ENCODE measurements at regions of chr1 and their contacts with region 1.

Region 1: GRCh38 chr1:161738627-161739287 is 10.8 kb upstream of the DUSP12 start:
- DNase-seq: peak; percentile 89
- H3K4me3 ChIP-seq: no peak overlapping the region
- H3K27ac ChIP-seq: peak overlapping the region; percentile 50
- H3K4me1 ChIP-seq: peaks cover 48% of the 10 kb centered on the region
- CTCF ChIP-seq: peak; percentile 85

Region 2: DNA sequence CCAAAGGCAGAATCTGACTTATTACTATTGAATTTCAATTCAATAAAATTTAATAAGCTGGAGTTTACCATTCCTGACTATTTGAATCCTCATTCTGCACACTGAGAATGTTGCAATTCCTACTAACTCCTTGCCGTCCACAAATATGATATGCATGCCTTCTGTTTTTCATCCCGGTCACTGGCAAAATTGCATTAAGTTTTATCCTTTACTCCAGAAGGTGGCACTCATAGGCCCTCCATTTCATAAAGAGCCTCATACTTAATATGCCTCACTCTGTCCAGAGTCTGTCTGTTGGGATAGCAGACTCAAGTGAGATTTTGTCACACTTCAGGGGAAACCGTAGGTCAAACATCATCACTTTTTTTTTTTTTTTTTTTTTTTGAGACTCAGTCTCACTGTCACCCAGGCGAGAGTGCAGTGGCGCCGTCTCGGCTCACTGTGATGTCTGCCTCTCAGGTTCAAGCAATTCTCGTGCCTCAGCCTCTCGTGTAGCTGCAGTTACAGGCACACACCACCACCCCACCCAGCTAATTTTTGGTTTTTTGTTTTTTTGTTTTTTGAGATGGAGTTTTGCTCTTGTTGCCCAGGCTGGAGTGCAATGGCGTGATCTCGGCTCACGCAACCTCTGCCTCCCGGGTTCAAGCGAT is 745.1 kb before region 1 on chr1:
- CTCF ChIA-PET with region 1: no interaction called
- POLR2A ChIA-PET with region 1: no interaction called
- intact Hi-C with region 1: no loop called
- DNase-seq: peak; percentile 50
- H3K4me3 ChIP-seq: no peak overlapping the region
- H3K27ac ChIP-seq: no peak overlapping the region
- H3K4me1 ChIP-seq: peaks cover 5% of the 10 kb centered on the region
- CTCF ChIP-seq: peak; percentile 75

Region 3: DNA sequence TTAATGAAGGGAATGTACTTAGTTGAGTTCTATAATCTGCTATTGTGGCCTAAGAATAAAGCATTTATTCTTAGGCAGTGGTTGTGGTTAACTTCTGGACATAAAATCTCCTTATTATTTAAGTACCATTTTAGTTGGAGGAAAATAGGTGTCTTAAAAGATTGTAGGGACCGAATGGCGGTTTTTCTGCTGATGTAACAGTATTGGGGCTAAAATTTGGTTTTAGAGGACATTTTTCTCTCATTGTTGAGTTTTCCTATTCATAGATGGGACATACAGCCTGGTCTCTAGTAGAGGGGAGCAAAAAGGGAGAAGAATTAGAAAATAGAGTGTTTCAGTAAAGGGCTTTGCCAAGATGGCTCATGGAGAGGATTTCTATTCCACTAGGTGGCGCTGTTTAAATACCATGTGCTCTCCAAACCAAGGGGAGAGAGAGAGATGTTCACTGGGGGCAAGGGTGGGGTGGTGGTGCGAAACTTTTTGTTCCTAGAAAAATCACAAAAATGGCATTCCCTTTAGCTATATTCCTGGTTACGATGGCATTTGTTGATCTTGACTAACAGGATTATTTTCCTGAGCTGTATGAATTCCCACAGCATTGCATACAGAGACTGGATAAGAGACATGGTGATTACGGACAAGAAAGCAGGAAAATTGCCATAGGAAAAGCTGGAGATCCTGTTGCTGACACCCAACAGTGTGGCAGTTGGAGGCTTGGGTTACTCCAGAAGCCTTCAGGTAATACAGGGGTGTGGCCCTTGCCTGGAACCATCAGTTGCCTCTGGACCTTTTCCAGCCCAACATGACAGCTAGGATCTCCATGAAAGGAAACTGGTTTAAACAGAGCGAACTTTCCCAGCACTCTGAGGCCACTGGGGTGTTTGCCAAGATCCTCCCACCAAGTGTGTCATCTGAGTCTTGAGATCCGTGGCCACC is 251.7 kb before region 1 on chr1:
- CTCF ChIA-PET with region 1: interaction called, 4 read pairs
- POLR2A ChIA-PET with region 1: no interaction called
- intact Hi-C with region 1: loop called (anchors 1 kb)
- DNase-seq: peak; percentile 81
- H3K4me3 ChIP-seq: no peak overlapping the region
- H3K27ac ChIP-seq: no peak overlapping the region
- H3K4me1 ChIP-seq: no peaks in the 10 kb centered on the region
- CTCF ChIP-seq: peak; percentile 95

Region 4: DNA sequence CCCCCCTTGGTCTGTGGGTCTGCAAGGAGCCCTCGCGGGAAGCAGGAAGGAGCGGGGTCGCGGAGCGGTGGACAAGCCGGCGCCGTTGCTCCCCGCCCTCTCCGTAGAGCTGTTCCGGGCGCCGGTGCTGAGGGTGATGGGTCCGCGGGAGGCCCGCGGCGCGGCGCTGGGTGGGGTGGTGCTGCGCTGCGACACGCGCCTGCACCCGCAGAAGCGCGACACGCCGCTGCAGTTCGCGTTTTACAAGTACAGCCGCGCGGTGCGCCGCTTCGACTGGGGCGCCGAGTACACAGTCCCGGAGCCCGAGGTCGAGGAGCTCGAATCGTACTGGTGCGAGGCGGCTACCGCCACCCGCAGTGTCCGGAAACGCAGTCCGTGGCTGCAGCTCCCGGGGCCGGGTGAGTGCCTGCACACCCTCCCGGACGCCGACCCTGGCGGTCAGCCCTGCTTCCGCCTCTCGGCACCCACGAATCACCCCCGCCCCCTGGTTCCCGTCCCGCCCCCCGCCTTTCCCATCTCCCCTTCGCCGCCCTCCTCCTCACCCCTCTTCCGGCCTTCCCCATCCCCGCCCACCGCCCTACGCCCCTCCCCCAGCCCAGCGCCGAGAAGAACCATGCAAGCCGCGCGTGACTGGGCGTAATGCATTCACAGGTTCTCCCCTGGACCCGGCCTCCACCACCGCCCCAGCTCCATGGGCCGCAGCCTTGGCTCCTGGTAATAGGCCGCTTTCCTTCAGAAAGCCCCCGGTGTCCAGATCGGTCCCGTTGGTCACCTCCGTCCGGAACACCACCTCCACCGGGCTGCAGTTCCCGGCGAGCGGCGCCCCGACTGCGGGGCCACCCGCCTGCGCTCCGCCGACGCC is 11.9 kb before region 1 on chr1:
- CTCF ChIA-PET with region 1: interaction called, 3 read pairs
- POLR2A ChIA-PET with region 1: interaction called, 33 read pairs
- intact Hi-C with region 1: no loop called
- DNase-seq: peak; percentile 89
- H3K4me3 ChIP-seq: peak overlapping the region; percentile 77
- H3K27ac ChIP-seq: peak overlapping the region; percentile 61
- H3K4me1 ChIP-seq: peaks cover 36% of the 10 kb centered on the region
- CTCF ChIP-seq: no peak

Region 5: GRCh38 chr1:161749509-161750407 is 11.0 kb after region 1 on chr1 and contains the start of gene DUSP12:
- CTCF ChIA-PET with region 1: interaction called, 7 read pairs
- POLR2A ChIA-PET with region 1: interaction called, 16 read pairs
- intact Hi-C with region 1: no loop called
- DNase-seq: peak; percentile 98
- H3K4me3 ChIP-seq: peak within 1 kb of the TSS; percentile 92
- H3K27ac ChIP-seq: peak within 1 kb of the TSS; percentile 75
- H3K4me1 ChIP-seq: peaks cover 28% of the 10 kb centered on the region
- CTCF ChIP-seq: peak; percentile 74
- total RNA-seq, gene DUSP12: 43.9 and 71.5 TPM in 2 replicates

Region 6: GRCh38 chr1:161766102-161766981 is 27.6 kb after region 1 on chr1 and contains the start of gene ATF6:
- CTCF ChIA-PET with region 1: no interaction called
- POLR2A ChIA-PET with region 1: no interaction called
- intact Hi-C with region 1: loop called (anchors 2 kb)
- DNase-seq: peak; percentile 85
- H3K4me3 ChIP-seq: peak within 1 kb of the TSS; percentile 92
- H3K27ac ChIP-seq: peak within 1 kb of the TSS; percentile 39
- H3K4me1 ChIP-seq: peaks cover 19% of the 10 kb centered on the region
- CTCF ChIP-seq: 0 out of 2 replicates have a peak, but pooled peaks have one; percentile 4
- total RNA-seq, gene ATF6: 8.5 and 10.2 TPM in 2 replicates

Region 7: GRCh38 chr1:161994175-161994668 is 255.5 kb after region 1 on chr1:
- CTCF ChIA-PET with region 1: no interaction called
- POLR2A ChIA-PET with region 1: no interaction called
- intact Hi-C with region 1: no loop called
- DNase-seq: no peak
- H3K4me3 ChIP-seq: no peak overlapping the region
- H3K27ac ChIP-seq: no peak overlapping the region
- H3K4me1 ChIP-seq: no peaks in the 10 kb centered on the region
- CTCF ChIP-seq: no peak

Region 8: DNA sequence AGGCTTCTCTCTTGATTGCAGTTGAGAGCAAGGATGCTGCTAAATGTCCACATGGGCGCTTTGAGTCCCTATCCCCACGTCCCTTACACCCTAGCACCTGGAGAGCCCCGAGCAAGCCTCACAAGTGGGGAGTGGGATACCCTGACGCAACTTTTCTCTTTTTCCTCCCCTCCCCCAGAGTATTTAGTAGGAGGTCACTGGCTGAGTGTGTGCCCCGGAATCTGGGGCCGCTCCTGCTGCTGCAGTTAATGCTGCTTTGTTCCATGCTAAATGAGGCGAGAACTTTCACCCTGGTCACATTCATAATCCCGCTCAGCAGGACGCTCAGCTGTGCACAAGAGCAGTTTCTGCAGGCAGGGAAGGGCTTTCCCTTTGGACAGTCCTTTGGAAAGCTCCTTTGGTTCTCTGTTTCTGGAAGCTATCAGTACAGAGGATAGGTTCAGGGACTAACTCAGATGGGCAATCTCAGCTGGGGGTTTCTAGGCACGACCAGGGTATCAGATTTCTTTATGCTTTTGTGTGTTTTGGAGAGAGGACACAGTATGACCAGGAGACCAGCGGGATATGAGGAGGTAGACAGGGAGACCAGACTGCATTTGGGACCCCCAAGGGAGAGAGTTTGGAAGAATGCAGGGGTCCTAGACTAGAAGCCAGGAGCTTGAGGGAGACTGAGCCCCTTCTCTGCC is 406.7 kb after region 1 on chr1:
- CTCF ChIA-PET with region 1: no interaction called
- POLR2A ChIA-PET with region 1: no interaction called
- intact Hi-C with region 1: no loop called
- DNase-seq: no peak
- H3K4me3 ChIP-seq: no peak overlapping the region
- H3K27ac ChIP-seq: no peak overlapping the region
- H3K4me1 ChIP-seq: no peaks in the 10 kb centered on the region
- CTCF ChIP-seq: no peak

Measured in OCI-LY7 (cell line).